ENCODE measurements at regions of chr3 and their contacts with region 1.

Region 1: GRCh38 chr3:59731943-59732342 is 682.1 kb upstream of the CFAP20DC start:
- DNase-seq: peak; percentile 32
- ATAC-seq: peak; percentile 85
- H3K4me3 Mint-ChIP-seq: peak overlapping the region; percentile 62
- H3K27ac Mint-ChIP-seq: peak overlapping the region; percentile 80
- H3K4me1 Mint-ChIP-seq: peaks cover 39% of the 10 kb centered on the region
- H3K27me3 Mint-ChIP-seq: peaks cover 9% of the 10 kb centered on the region

Region 2: GRCh38 chr3:59580996-59581395 is 150.9 kb before region 1 on chr3:
- POLR2A ChIA-PET with region 1: no interaction called
- DNase-seq: no peak
- ATAC-seq: no peak
- H3K4me3 Mint-ChIP-seq: no peak overlapping the region
- H3K27ac Mint-ChIP-seq: no peak overlapping the region
- H3K4me1 Mint-ChIP-seq: peaks cover 2% of the 10 kb centered on the region
- H3K27me3 Mint-ChIP-seq: no peaks in the 10 kb centered on the region

Region 3: GRCh38 chr3:59709702-59710553 is 22.0 kb before region 1 on chr3:
- POLR2A ChIA-PET with region 1: interaction called, 10 read pairs
- DNase-seq: peak; percentile 65
- ATAC-seq: peak; percentile 93
- H3K4me3 Mint-ChIP-seq: no peak overlapping the region
- H3K27ac Mint-ChIP-seq: no peak overlapping the region
- H3K4me1 Mint-ChIP-seq: peaks cover 3% of the 10 kb centered on the region
- H3K27me3 Mint-ChIP-seq: peaks cover 7% of the 10 kb centered on the region

Region 4: DNA sequence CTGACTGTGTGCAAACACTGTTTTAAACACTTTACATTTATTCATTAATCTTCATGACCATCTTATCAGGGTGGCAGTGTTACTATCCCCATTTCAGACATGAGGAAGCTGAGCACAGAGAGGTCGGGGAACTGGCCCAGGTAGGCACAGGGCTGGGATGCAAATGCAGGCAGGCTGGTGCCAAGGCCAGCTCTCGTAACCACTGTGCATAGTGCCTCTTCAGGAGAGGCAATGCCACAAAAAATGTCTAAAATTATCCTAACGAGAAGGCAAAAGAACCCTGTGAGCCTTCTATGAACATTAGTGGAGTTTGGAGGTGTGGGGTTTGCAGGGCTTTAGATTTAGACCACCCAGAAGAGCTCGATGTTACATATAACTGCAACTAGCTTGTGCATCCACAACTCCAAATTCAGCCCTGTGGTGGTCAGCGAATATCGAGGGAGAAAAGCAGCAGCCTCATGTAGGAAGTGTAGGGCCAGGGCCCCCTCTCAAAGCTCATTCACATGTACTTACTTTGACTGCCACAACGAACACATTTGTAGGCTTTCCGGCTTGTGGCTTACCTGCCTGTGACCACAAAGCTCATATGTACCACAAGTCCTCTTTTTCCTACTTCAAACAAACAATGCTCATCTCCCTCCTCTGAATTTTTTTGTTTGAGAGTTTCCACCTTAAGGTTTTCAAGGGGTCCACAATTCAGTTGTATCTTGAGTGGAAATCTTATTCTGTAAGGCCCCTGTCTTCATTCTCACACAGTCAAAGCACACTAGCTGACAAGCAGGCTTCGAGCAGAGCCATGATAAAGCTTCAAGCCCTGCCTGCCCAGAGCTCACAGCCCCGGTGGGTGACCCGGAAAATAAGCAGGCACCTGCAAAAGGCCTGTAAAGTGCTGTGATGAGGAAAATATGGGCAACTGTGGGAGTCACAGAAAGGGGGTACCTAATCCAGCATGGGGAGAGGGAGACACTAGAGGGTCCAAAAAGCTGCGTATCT is 40.8 kb after region 1 on chr3:
- POLR2A ChIA-PET with region 1: interaction called, 10 read pairs
- DNase-seq: peak; percentile 74
- ATAC-seq: peak; percentile 77
- H3K4me3 Mint-ChIP-seq: peak overlapping the region; percentile 59
- H3K27ac Mint-ChIP-seq: peak overlapping the region; percentile 82
- H3K4me1 Mint-ChIP-seq: peaks cover 43% of the 10 kb centered on the region
- H3K27me3 Mint-ChIP-seq: peaks cover 16% of the 10 kb centered on the region

Region 5: DNA sequence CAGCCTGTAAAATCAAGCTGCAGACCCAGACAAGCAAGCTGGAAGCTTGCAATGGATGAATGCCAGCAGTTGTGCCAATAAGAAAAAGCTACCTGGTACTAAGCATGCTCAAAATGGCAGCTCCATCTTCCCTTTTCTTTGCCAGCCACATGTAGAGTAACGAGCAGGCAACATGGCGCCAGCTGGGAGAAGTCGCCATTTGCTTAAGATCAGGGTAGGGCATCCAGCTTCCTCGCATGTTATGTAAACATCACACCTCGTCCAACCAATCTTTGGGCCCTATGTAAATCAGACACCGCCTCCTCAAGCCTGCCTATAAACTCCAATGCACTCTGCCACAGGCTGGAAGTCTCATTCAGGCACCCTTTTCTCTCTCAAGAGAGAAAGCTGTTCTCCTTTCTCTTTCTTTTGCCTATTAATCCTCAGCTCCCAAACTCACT is 545.4 kb after region 1 on chr3:
- POLR2A ChIA-PET with region 1: no interaction called
- DNase-seq: no peak
- ATAC-seq: no peak
- H3K4me3 Mint-ChIP-seq: no peak overlapping the region
- H3K27ac Mint-ChIP-seq: no peak overlapping the region
- H3K4me1 Mint-ChIP-seq: no peaks in the 10 kb centered on the region
- H3K27me3 Mint-ChIP-seq: no peaks in the 10 kb centered on the region